MCF 10A (cell line): ENCODE measurements at regions of chr5 and their contacts with region 1.

Region 1: DNA sequence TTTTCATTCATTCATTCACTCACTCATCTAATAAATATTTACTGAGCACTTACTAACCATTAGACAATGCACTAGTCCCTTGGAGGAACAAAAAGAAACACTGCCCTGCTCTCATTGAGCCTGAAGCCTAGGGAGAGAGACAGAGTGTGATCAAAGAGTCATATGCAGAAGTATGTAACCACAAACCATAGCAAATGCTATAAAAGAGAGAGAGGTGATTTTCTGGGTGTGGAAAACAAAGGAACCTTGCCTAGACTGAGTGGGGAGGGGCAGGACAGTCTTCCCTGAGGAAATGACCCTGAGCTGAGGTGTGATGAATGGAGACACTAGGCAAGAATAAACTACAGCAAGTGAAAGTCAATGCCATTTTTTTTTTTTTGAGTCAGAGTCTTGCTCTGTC is 10.8 kb upstream of the ADRA1B start:
- DNase-seq: peak; percentile 96
- H3K4me3 Mint-ChIP-seq: no peak overlapping the region
- H3K27ac Mint-ChIP-seq: peak overlapping the region; percentile 15
- H3K4me1 Mint-ChIP-seq: peaks cover 60% of the 10 kb centered on the region
- H3K27me3 Mint-ChIP-seq: no peaks in the 10 kb centered on the region
- CTCF ChIP-seq: no peak

Region 2: GRCh38 chr5:159826351-159827214 is 78.9 kb before region 1 on chr5:
- CTCF ChIA-PET with region 1: no interaction called
- POLR2A ChIA-PET with region 1: interaction called, 4 read pairs
- intact Hi-C with region 1: loop called (anchors 5 kb)
- DNase-seq: peak; percentile 98
- H3K4me3 Mint-ChIP-seq: peak overlapping the region; percentile 5
- H3K27ac Mint-ChIP-seq: peak overlapping the region; percentile 70
- H3K4me1 Mint-ChIP-seq: peaks cover 35% of the 10 kb centered on the region
- H3K27me3 Mint-ChIP-seq: no peaks in the 10 kb centered on the region
- CTCF ChIP-seq: no peak

Region 3: GRCh38 chr5:159915904-159916840 is 10.7 kb after region 1 on chr5 and contains the start of gene ADRA1B:
- CTCF ChIA-PET with region 1: interaction called, 21 read pairs
- POLR2A ChIA-PET with region 1: interaction called, 8 read pairs
- intact Hi-C with region 1: no loop called
- DNase-seq: peak; percentile 55
- H3K4me3 Mint-ChIP-seq: peak within 1 kb of the TSS; percentile 44
- H3K27ac Mint-ChIP-seq: peak within 1 kb of the TSS; percentile 28
- H3K4me1 Mint-ChIP-seq: peaks cover 44% of the 10 kb centered on the region
- H3K27me3 Mint-ChIP-seq: no peaks in the 10 kb centered on the region
- CTCF ChIP-seq: peak; percentile 63
- total RNA-seq, gene ADRA1B: 0.14 TPM in 1 of 2 replicates, not detected in the other